ENCODE measurements at regions of chr15 and their contacts with region 1.

Region 1: DNA sequence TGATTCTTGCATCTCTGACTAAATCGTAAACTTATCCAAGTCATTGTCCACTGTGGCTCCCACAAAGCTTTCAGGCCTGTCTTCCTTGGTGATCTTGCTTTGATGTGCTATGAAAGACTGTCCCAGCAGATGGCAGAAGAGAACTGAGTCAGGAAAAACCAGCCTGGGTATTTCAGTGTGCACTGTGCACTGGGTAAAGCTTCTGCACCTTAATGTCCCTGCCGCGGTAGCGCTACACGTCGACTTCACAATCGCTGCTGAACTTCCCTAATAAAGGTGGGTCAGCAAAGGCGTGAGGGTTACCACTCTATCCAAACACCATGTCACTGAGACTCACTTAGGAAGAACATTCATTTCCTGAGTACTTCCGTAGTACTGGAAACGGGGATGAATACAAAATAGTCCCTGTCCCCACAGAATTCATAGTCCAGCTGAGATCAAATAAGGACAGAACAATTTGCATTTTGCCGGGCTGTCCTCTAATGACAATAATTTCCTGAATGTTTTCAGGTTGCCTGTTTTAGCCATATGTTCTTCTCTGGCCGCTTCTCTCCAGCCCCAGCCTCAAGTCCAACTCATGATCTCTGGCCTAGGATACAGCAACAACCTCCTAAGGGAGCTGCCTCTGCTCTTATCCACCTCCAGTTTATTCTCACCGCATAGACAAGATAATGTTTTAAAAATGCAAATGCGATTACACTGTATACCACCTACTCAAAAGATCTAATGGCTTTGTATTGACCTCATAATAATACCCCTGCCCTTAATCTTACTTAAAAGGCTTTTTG is 83.6 kb upstream of the AKAP13 start:
- DNase-seq: peak in 2 of 3 donors; percentile 29 to 71
- ATAC-seq: peak; percentile 99
- H3K4me3 ChIP-seq: peak overlapping the region in 2 of 3 donors; percentile 23 to 27
- H3K27ac ChIP-seq: no peak overlapping the region
- H3K4me1 ChIP-seq: no peaks in the 10 kb centered on the region
- H3K27me3 ChIP-seq: no peaks in the 10 kb centered on the region
- CTCF ChIP-seq: peak; percentile 66 to 79 (median 74)
- POLR2A ChIP-seq: no peak

Region 2: DNA sequence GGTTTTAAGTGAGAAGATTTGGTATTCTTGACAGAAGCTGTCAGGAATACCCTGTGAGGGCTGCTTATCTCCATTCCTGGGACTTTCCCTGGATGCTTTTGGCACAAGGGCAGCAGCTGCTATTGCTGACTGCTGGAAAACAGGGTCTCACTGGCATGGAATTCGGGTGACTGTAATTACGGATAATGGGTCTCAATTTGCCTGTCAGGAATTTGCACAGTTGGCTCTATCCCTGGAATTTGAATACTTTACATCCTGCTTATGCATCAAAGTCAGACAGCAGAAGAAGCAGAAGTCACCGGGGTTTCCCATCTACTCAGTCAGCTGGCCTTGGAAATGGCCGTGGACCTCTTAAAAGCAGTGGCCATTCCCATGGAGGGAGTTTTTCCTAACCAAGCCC is 57.7 kb after region 1 on chr15:
- intact Hi-C with region 1: no loop called
- DNase-seq: no peak
- ATAC-seq: no peak
- H3K4me3 ChIP-seq: no peak overlapping the region
- H3K27ac ChIP-seq: no peak overlapping the region
- H3K4me1 ChIP-seq: peaks cover 0 to 14% (median 6%) of the 10 kb centered on the region in 4 donors
- H3K27me3 ChIP-seq: no peaks in the 10 kb centered on the region
- CTCF ChIP-seq: no peak
- POLR2A ChIP-seq: no peak

Region 3: GRCh38 chr15:85504749-85505676 is 208.2 kb after region 1 on chr15:
- intact Hi-C with region 1: loop called in 1 of 2 experiments (anchors 10 kb)
- DNase-seq: no peak
- ATAC-seq: peak; percentile 64 to 75 (median 71)
- H3K4me3 ChIP-seq: no peak overlapping the region
- H3K27ac ChIP-seq: no peak overlapping the region
- H3K4me1 ChIP-seq: peaks cover 0 to 3% (median 0%) of the 10 kb centered on the region in 4 donors
- H3K27me3 ChIP-seq: no peaks in the 10 kb centered on the region
- CTCF ChIP-seq: peak; percentile 54 to 66 (median 61)
- POLR2A ChIP-seq: no peak